ENCODE measurements at regions of chr10 and their contacts with region 1.

Region 1: GRCh38 chr10:48845512-48845911 is 94.1 kb downstream of the LRRC18 start:
- DNase-seq: no peak
- H3K4me3 ChIP-seq: no peak overlapping the region
- H3K27ac ChIP-seq: no peak overlapping the region
- H3K4me1 ChIP-seq: no peaks in the 10 kb centered on the region
- H3K27me3 ChIP-seq: no peaks in the 10 kb centered on the region
- CTCF ChIP-seq: no peak

Region 2: GRCh38 chr10:48802611-48803071 is 42.9 kb before region 1 on chr10:
- CTCF ChIA-PET with region 1: no interaction called
- POLR2A ChIA-PET with region 1: no interaction called
- intact Hi-C with region 1: loop called (anchors 5 kb)
- DNase-seq: no peak
- H3K4me3 ChIP-seq: no peak overlapping the region
- H3K27ac ChIP-seq: no peak overlapping the region
- H3K4me1 ChIP-seq: no peaks in the 10 kb centered on the region
- H3K27me3 ChIP-seq: no peaks in the 10 kb centered on the region
- CTCF ChIP-seq: no peak

Region 3: GRCh38 chr10:48907730-48908129 is 62.2 kb after region 1 on chr10:
- CTCF ChIA-PET with region 1: no interaction called
- POLR2A ChIA-PET with region 1: no interaction called
- intact Hi-C with region 1: no loop called
- DNase-seq: no peak
- H3K4me3 ChIP-seq: no peak overlapping the region
- H3K27ac ChIP-seq: no peak overlapping the region
- H3K4me1 ChIP-seq: no peaks in the 10 kb centered on the region
- H3K27me3 ChIP-seq: peaks cover 5% of the 10 kb centered on the region
- CTCF ChIP-seq: no peak